K562 (cell line): ENCODE measurements at regions of chr11 and their contacts with region 1.

Region 1: DNA sequence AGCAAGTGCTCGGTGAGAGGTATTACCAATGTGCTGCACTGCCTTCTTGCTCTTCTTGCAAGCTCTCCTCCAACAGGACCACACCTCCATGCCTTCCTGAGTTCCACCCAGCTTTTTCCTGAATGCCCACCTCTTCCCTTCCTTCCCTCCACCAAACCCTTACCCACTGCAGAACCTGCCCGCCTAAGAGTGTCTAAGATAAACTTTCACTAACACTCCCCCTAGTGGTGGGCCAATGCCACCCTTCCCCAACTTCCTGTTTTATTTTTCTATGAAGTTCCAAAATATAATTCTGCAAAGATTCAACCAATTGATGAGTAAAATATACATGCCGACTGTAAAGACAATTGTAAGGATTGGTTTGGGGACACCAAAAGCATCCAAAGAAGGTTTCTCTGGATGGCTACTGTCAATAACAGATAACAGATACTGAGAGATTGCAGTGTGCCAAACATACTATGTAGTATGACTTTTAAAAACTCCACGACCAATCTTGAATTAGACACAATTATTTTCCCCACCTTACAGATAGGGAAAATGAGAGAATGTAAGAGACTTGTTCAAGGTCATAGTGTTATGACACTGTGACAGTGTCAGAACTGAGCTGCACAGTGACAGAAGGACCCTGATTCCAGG is 38.6 kb upstream of the BMAL1 start:
- DNase-seq: peak; percentile 39 to 56 (median 46)
- ATAC-seq: peak; percentile 84
- H3K4me3 ChIP-seq: no peak overlapping the region
- H3K27ac ChIP-seq: no peak overlapping the region
- H3K4me1 ChIP-seq: no peaks in the 10 kb centered on the region
- H3K27me3 ChIP-seq: peaks cover 0 to 4% of the 10 kb centered on the region in 2 experiments; a peak in 1 of 5 replicates
- CTCF ChIP-seq: peak; percentile 66 to 80 (median 78)
- EP300 ChIP-seq: no peak
- POLR2A ChIP-seq: no peak
- RAD21 ChIP-seq: peak; percentile 60 to 63

Region 2: DNA sequence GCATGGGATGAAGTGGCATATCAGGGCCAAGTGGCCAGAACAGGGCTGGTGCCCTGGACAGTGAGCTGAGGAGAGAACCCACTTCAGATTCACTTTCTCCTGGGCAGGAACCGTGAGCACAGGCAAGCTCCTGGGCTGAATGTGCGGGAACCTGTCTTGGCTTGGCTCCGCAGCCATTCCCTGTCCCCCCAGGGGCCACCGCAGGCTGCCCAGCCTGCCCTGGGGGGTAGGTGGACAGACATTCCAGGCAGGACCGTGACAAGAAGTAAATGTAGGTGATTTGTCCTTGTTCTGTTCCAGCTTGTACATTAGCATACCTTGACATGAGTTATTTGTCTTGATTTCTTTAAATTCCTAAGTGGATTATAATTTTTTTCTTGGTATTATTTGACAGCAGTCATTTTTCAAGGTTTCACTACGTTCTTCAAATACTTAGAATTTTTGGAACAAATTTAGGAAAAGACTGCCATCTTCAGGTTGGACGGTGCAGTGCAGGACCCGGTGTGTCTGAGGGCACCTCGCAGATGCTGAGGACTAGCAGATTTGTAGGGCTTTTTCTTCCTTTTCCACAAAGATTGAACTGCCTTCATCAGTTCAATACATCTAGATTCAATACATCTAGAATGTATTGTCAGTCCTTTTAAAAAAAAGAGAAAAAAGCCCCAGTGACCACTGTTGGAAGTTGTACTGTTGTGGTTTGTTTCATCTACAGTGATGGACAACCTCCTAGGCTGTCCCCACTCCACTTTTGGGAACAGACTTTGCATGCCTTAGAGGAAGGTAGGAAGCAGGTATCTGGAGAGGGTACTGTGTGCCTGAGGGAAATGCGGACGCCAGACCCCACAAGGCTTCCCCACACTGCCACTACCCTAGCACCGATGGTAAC is 345.0 kb before region 1 on chr11:
- CTCF ChIA-PET with region 1: no interaction called
- POLR2A ChIA-PET with region 1: no interaction called
- in situ Hi-C with region 1: no loop called
- intact Hi-C with region 1: no loop called
- DNase-seq: peak; percentile 63 to 65 (median 65)
- ATAC-seq: peak; percentile 90
- H3K4me3 ChIP-seq: no peak overlapping the region
- H3K27ac ChIP-seq: no peak overlapping the region
- H3K4me1 ChIP-seq: peaks cover 0 to 3% of the 10 kb centered on the region in 2 experiments; a peak in 2 of 5 replicates
- H3K27me3 ChIP-seq: no peaks in the 10 kb centered on the region
- CTCF ChIP-seq: peak; percentile 69 to 84 (median 81)
- EP300 ChIP-seq: no peak
- POLR2A ChIP-seq: no peak
- RAD21 ChIP-seq: peak; percentile 78 to 81

Region 3: DNA sequence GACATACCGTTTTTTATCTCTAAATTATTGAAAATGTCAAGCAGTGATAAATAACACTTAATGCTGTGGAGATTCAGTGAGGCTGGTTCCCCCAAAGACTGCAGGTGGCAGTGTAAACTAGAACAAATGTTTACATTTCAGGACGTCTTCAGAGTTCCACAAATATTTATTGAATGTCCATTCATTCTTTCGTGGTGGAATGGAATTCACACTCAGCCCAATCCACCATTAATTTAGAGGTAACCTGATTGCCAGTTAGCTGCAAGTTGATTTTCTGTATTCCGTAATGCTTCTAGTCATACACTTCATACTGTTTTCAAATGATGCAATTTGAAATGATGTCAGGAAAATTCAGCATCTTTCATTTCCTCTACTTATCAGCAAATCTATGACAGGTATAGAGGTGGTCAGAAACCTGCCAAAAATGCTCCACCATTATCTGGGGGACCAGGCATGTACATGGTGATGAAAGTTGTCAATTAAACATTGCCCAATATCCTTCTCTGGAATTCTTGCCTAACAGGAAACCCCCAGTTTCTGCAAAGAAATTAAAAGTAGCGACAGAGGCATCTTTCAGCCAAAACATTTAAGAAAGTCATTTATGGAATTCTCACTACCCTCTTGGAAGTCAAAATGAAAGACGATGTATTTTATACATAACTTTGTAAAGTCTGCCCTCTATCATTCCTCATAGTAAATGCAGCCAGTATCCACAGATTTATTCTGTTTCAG is 55.7 kb before region 1 on chr11:
- CTCF ChIA-PET with region 1: interaction called, 3 read pairs
- POLR2A ChIA-PET with region 1: no interaction called
- in situ Hi-C with region 1: no loop called
- intact Hi-C with region 1: loop called (anchors 1 kb)
- DNase-seq: peak in 2 of 4 experiments; percentile 17 to 31
- ATAC-seq: peak; percentile 73
- H3K4me3 ChIP-seq: no peak overlapping the region
- H3K27ac ChIP-seq: no peak overlapping the region
- H3K4me1 ChIP-seq: no peaks in the 10 kb centered on the region
- H3K27me3 ChIP-seq: no peaks in the 10 kb centered on the region; a peak in 1 of 5 replicates
- CTCF ChIP-seq: peak; percentile 34 to 65 (median 46); a peak in 4 of 6 replicates
- EP300 ChIP-seq: no peak
- POLR2A ChIP-seq: no peak
- RAD21 ChIP-seq: peak; percentile 68 to 69

Region 4: DNA sequence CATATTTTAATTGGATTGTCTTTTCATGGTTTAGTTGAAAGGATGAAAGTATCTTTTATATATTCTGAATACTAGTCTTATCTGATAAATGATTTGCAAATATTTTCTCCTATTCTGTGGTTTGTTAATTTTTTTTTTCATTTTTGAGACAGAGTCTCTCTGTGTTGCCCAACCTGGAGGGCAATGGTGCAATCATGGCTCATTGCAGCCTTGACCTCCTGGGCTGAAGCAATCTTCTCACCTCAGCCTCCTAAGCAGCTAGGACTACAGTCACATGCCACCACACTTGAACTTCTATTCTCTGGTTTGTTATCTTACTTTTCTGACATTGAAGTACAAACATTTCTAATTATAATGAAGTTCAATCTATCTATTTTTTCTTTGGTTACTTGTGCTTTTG is 399.4 kb after region 1 on chr11:
- CTCF ChIA-PET with region 1: no interaction called
- POLR2A ChIA-PET with region 1: no interaction called
- in situ Hi-C with region 1: no loop called
- intact Hi-C with region 1: no loop called
- DNase-seq: no peak
- ATAC-seq: no peak
- H3K4me3 ChIP-seq: no peak overlapping the region
- H3K27ac ChIP-seq: no peak overlapping the region
- H3K4me1 ChIP-seq: no peaks in the 10 kb centered on the region
- H3K27me3 ChIP-seq: no peaks in the 10 kb centered on the region
- CTCF ChIP-seq: no peak
- EP300 ChIP-seq: no peak
- POLR2A ChIP-seq: no peak
- RAD21 ChIP-seq: no peak